K562 (cell line): ENCODE measurements at regions of chr16 and their contacts with region 1.

Region 1: GRCh38 chr16:30922960-30923535 is 324 bp upstream of the FBXL19 start:
- DNase-seq: peak; percentile 89 to 100 (median 92)
- ATAC-seq: peak; percentile 87
- H3K4me3 ChIP-seq: peak overlapping the region; percentile 85
- H3K27ac ChIP-seq: peak overlapping the region; percentile 100
- H3K4me1 ChIP-seq: peaks cover 3 to 50% of the 10 kb centered on the region in 2 experiments; a peak in 4 of 5 replicates
- H3K27me3 ChIP-seq: no peaks in the 10 kb centered on the region; a peak in 1 of 5 replicates
- CTCF ChIP-seq: no peak
- EP300 ChIP-seq: no peak
- POLR2A ChIP-seq: peak; percentile 80
- RAD21 ChIP-seq: no peak

Region 2: GRCh38 chr16:30657866-30658730 is 264.9 kb before region 1 on chr16 and contains the start of gene FBRS:
- CTCF ChIA-PET with region 1: interaction called, 5 read pairs
- POLR2A ChIA-PET with region 1: no interaction called
- in situ Hi-C with region 1: no loop called
- intact Hi-C with region 1: loop called (anchors 5 kb)
- DNase-seq: peak; percentile 93 to 100 (median 96)
- ATAC-seq: peak; percentile 88
- H3K4me3 ChIP-seq: peak within 1 kb of the TSS; percentile 90
- H3K27ac ChIP-seq: peak within 1 kb of the TSS; percentile 99
- H3K4me1 ChIP-seq: peaks cover 20 to 52% of the 10 kb centered on the region in 2 experiments; a peak in 4 of 5 replicates
- H3K27me3 ChIP-seq: no peaks in the 10 kb centered on the region
- CTCF ChIP-seq: peak; percentile 90 to 97 (median 90)
- EP300 ChIP-seq: no peak
- POLR2A ChIP-seq: peak; percentile 95
- RAD21 ChIP-seq: peak; percentile 78 to 82
- polyA plus RNA-seq, gene FBRS: 0.32 to 0.46 TPM

Region 3: DNA sequence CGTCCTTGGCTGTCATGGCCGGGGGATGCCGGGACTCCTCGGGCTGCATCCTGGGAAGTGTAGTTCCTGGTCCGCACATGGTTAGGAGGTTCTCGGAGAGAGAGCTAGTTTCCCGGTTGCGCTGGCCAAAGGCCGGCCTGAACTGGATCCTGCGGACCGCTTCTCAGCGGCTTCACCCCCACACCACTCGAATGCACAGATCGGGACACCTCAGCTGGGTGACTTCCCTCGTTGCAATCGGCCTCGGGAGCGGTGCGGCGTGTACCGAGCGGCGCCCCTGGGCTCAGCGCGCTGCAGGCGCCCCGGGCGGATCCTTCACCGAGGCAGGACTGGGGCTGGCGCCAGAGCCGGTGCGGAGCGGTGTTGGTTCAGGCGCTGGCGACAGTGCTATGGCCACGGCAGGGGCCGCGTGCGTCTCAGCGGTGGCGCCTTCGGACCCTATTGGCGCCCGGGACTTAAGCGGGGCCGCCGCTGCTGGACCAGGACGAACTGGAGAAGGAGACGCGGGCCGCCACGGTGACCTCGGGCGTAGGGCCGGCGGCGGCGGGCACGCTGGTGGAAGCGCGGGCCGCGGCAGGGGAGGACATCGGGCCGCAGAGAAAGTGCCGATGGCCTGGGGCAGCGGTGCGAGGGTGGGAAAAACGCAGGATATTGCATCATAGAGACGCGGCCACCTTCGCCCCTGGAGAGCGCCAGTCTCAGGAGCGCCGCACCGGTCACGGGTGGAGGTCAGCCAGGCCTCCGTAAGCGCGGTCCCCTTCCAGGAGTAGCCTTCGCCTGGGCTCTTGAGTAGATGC is 147.5 kb before region 1 on chr16:
- CTCF ChIA-PET with region 1: no interaction called
- POLR2A ChIA-PET with region 1: interaction called, 4 read pairs
- in situ Hi-C with region 1: no loop called
- intact Hi-C with region 1: loop called (anchors 5 kb)
- DNase-seq: peak; percentile 86 to 93 (median 90)
- ATAC-seq: peak; percentile 84
- H3K4me3 ChIP-seq: peak overlapping the region; percentile 66
- H3K27ac ChIP-seq: peak overlapping the region; percentile 94
- H3K4me1 ChIP-seq: peaks cover 27 to 49% of the 10 kb centered on the region in 2 experiments
- H3K27me3 ChIP-seq: no peaks in the 10 kb centered on the region
- CTCF ChIP-seq: 0 out of 6 replicates have a peak, but pooled peaks of 1 of the 3 experiments have one; percentile 4
- EP300 ChIP-seq: 0 out of 2 replicates have a peak, but pooled peaks have one; percentile 31
- POLR2A ChIP-seq: peak; percentile 93
- RAD21 ChIP-seq: no peak; a peak in 1 of 4 replicates

Region 4: GRCh38 chr16:30844671-30845449 is 78.2 kb before region 1 on chr16:
- CTCF ChIA-PET with region 1: interaction called, 20 read pairs
- POLR2A ChIA-PET with region 1: interaction called, 4 read pairs
- in situ Hi-C with region 1: loop called (anchors 5 kb)
- intact Hi-C with region 1: loop called (anchors 1 kb)
- DNase-seq: peak; percentile 86 to 96 (median 87)
- ATAC-seq: peak; percentile 96
- H3K4me3 ChIP-seq: no peak overlapping the region
- H3K27ac ChIP-seq: peak overlapping the region; percentile 46; the same call in 2 of the 3 replicates
- H3K4me1 ChIP-seq: peaks cover 4 to 8% of the 10 kb centered on the region in 2 experiments; a peak in 2 of 5 replicates
- H3K27me3 ChIP-seq: no peaks in the 10 kb centered on the region
- CTCF ChIP-seq: peak; percentile 89 to 98 (median 94)
- EP300 ChIP-seq: peak; percentile 13; the same call in 1 of the 2 replicates
- POLR2A ChIP-seq: no peak
- RAD21 ChIP-seq: peak; percentile 94 to 96

Region 5: GRCh38 chr16:30893744-30894539 is 29.1 kb before region 1 on chr16 and contains the start of gene BCL7C:
- CTCF ChIA-PET with region 1: interaction called, 3 read pairs
- POLR2A ChIA-PET with region 1: no interaction called
- in situ Hi-C with region 1: no loop called
- intact Hi-C with region 1: loop called (anchors 1 kb)
- DNase-seq: peak; percentile 91 to 95 (median 92)
- ATAC-seq: peak; percentile 86
- H3K4me3 ChIP-seq: peak within 1 kb of the TSS; percentile 67
- H3K27ac ChIP-seq: peak within 1 kb of the TSS; percentile 90
- H3K4me1 ChIP-seq: peaks cover 35 to 47% of the 10 kb centered on the region in 2 experiments
- H3K27me3 ChIP-seq: no peaks in the 10 kb centered on the region
- CTCF ChIP-seq: peak; percentile 41 to 75 (median 59); a peak in 5 of 6 replicates
- EP300 ChIP-seq: no peak
- POLR2A ChIP-seq: peak; percentile 76
- RAD21 ChIP-seq: peak; percentile 37 to 52
- polyA plus RNA-seq, gene BCL7C: 1.7 to 2.6 TPM

Region 6: DNA sequence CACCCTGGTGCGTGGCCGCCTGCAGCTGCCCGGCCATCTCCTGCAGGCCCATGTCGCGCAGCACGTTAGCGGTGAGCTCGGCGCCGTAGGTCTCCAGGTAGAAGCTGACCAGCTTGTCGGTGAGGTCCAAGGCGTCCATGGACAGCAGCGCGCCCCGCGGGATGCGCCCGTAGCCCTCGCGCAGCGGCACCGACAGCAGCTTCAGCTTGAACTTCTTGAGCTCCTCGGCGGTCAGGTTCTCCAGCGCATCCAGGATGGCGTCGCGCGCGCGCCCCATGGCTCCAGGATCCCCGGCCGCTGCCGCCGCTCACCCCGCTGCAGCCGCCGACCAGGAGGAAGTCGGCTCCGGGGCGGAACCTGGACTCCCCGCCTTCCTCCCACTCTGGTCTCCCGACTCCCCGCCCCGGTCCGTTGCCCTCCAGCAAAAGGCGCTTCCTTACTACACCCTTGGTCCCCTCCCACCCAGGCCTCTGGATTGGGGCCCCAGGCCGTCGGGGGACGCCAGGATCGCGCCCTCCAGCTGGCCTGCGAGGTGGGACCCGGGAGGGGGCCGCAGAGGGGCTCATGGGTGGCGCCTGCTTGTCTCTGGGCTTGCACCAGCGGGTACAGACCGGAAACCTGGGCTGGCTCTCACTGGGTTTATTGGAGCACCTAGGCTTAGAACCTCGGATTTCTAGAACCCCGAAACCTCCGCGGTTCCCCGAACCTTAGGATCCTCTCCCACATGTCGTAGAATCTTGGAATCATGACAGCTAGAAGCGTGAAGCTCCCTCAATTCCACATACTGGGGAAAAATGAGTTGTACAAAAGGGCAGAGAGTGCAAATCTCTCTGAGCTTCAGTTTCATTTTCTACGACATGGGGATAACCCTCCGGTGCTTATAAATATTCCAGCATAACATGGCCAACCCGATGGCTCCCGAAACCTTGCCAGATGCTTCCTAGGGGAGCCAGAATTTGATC is 279.6 kb after region 1 on chr16 and contains the start of gene PYCARD:
- CTCF ChIA-PET with region 1: no interaction called
- POLR2A ChIA-PET with region 1: no interaction called
- in situ Hi-C with region 1: no loop called
- intact Hi-C with region 1: no loop called
- DNase-seq: peak; percentile 41 to 59 (median 57)
- ATAC-seq: peak; percentile 22
- H3K4me3 ChIP-seq: peak within 1 kb of the TSS; percentile 45
- H3K27ac ChIP-seq: no peak within 1 kb of the TSS; the same call in 2 of the 3 replicates
- H3K4me1 ChIP-seq: peaks cover 20 to 33% of the 10 kb centered on the region in 2 experiments
- H3K27me3 ChIP-seq: peaks cover 0 to 6% of the 10 kb centered on the region in 2 experiments; a peak in 2 of 5 replicates
- CTCF ChIP-seq: no peak
- EP300 ChIP-seq: no peak
- POLR2A ChIP-seq: no peak
- RAD21 ChIP-seq: no peak
- polyA plus RNA-seq, gene PYCARD: 1.3 to 1.6 TPM